ENCODE measurements at regions of chr6 and their contacts with region 1.

Region 1: DNA sequence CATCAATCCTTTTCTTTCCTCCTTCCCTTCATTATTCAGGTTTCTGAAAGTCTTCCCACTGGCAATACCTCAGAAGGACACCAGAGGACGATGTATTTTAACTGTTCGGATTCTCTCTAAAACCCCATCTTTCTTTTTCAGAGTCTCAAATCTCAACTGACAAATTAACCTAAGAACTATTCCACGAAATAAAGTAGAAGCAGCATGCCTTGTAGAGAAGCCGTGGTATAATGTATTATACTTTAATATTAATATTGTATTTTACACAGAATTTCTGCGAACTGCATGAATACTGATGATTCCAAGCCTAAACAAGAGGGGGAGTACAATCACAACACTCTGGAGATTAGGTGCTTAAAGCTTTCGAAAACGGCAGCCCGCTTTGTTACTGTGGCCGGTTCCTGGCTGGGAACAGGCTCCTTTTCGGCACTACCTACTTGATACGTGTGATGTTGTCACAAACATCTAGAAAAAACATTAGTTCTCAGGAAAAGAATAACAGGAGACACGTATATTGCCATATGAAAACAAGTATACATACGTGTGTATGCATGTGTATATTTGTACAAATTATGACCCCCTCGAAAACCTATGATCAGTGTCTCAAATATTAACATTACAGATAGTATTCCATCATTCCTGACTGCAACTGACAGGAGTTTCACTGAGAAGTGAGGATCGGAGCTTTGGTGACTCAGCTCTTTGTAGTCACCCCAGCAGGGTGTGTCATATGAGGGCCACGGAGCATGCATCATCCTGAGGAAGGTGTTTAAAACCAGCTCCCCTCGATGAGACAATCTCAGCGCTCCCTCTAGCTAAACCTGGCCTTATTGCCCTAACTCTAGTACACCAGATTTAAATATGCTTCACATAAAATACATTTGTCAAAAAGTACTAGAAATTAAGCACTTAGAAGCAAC is 319.7 kb upstream of the TCF21 start:
- DNase-seq: peak; percentile 18 to 59 (median 55)
- ATAC-seq: peak; percentile 82 to 86
- H3K4me3 ChIP-seq: peak overlapping the region; percentile 66
- H3K27ac ChIP-seq: no peak overlapping the region
- H3K4me1 ChIP-seq: no peaks in the 10 kb centered on the region
- H3K27me3 ChIP-seq: no peaks in the 10 kb centered on the region

Region 2: DNA sequence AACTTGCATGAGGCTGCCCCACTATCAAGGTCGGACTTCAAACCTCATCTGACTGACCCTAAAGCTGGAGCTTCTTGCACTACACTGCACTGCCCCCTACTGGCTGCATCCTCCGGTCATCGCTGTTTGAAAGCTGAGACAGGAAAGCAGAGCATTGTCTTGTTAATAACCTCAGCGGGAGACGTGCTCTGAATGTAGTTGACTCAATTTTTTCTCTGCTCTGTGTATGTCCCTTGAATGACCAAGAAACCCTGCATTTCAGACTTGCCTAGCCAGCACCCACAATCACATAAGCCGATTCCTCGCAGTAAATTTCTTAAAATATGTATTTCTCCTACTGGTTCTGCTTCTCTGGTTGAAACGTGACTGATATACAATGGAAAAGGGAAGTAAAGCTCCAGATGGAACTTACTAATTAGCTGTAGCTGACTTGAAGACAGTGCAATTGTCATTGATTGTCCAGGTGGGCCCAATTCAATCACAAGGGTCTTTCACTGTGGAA is 347.5 kb after region 1 on chr6:
- intact Hi-C with region 1: loop called in 3 of 4 experiments (anchors 5 to 10 kb)
- DNase-seq: peak; percentile 89 to 97 (median 92)
- ATAC-seq: peak; percentile 89 to 91
- H3K4me3 ChIP-seq: no peak overlapping the region
- H3K27ac ChIP-seq: no peak overlapping the region
- H3K4me1 ChIP-seq: no peaks in the 10 kb centered on the region
- H3K27me3 ChIP-seq: no peaks in the 10 kb centered on the region

Region 3: GRCh38 chr6:134097114-134097707 is 528.0 kb after region 1 on chr6:
- intact Hi-C with region 1: loop called in 3 of 4 experiments (anchors 5 to 10 kb)
- DNase-seq: peak in 2 of 3 donors; percentile 39 to 65
- ATAC-seq: peak in 1 of 2 donors; percentile 74
- H3K4me3 ChIP-seq: no peak overlapping the region
- H3K27ac ChIP-seq: no peak overlapping the region
- H3K4me1 ChIP-seq: no peaks in the 10 kb centered on the region
- H3K27me3 ChIP-seq: no peaks in the 10 kb centered on the region